Heart left ventricle (tissue), 16 donors: ENCODE measurements at regions of chr6 and their contacts with region 1.

Region 1: GRCh38 chr6:154921482-154921881 is 73.6 kb upstream of the TIAM2 start:
- DNase-seq: no peak
- ATAC-seq: no peak
- H3K4me3 ChIP-seq: no peak overlapping the region
- H3K27ac ChIP-seq: no peak overlapping the region
- H3K4me1 ChIP-seq: peaks cover 0 to 11% (median 0%) of the 10 kb centered on the region in 12 donors
- H3K27me3 ChIP-seq: no peaks in the 10 kb centered on the region
- CTCF ChIP-seq: no peak
- POLR2A ChIP-seq: no peak

Region 2: GRCh38 chr6:154868143-154868594 is 53.3 kb before region 1 on chr6:
- intact Hi-C with region 1: loop called in 1 of 10 experiments (anchors 5 kb)
- DNase-seq: no peak
- ATAC-seq: peak in 2 of 4 donors; percentile 42 to 50
- H3K4me3 ChIP-seq: no peak overlapping the region
- H3K27ac ChIP-seq: no peak overlapping the region
- H3K4me1 ChIP-seq: peaks cover 0 to 16% (median 0%) of the 10 kb centered on the region in 12 donors
- H3K27me3 ChIP-seq: no peaks in the 10 kb centered on the region
- CTCF ChIP-seq: peak; percentile 57 to 89 (median 70)
- POLR2A ChIP-seq: no peak

Region 3: GRCh38 chr6:154974485-154975149 is 53.1 kb after region 1 on chr6:
- intact Hi-C with region 1: no loop called
- DNase-seq: no peak
- ATAC-seq: no peak
- H3K4me3 ChIP-seq: no peak overlapping the region
- H3K27ac ChIP-seq: no peak overlapping the region
- H3K4me1 ChIP-seq: no peaks in the 10 kb centered on the region
- H3K27me3 ChIP-seq: no peaks in the 10 kb centered on the region
- CTCF ChIP-seq: no peak
- POLR2A ChIP-seq: no peak

Region 4: GRCh38 chr6:155041741-155042279 is 120.3 kb after region 1 on chr6:
- intact Hi-C with region 1: no loop called
- DNase-seq: no peak
- ATAC-seq: no peak
- H3K4me3 ChIP-seq: no peak overlapping the region
- H3K27ac ChIP-seq: no peak overlapping the region
- H3K4me1 ChIP-seq: peaks cover 0 to 11% (median 2%) of the 10 kb centered on the region in 12 donors
- H3K27me3 ChIP-seq: no peaks in the 10 kb centered on the region
- CTCF ChIP-seq: no peak
- POLR2A ChIP-seq: no peak